GM18951 (cell line): ENCODE measurements at regions of chr3 and their contacts with region 1.

Region 1: DNA sequence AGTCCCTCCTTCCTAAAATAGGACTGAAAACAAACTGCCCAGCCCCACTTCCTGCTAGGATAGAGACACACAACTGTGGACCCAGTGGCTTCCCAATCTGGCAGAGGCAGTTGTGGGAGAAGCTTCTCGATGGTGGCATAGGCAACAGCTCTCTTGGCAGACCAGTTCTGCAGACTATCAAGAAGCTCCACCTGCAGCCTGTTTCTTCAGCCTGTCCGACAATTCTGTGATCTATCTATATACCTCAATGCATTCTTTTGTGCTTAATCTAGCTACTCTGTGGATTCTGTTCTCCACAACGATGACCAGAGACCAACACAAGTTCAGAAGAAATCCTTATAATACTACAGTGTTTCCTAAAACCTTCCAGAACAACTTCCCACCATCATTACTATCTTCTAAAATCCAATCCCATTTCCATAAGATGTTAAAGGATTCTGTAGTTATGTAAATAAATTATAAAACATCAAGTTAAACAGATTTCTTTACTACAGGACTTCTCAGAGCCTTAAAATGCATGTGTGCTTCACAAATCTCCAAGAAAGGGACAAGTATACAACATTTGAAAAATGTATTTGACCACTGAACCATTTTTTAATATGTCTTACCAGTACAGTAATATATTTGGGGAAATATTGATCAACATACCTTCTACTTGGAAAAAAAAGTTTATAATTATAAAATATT is 57.7 kb downstream of the IGF2BP2 start:
- POLR2A ChIP-seq: no peak

Region 2: DNA sequence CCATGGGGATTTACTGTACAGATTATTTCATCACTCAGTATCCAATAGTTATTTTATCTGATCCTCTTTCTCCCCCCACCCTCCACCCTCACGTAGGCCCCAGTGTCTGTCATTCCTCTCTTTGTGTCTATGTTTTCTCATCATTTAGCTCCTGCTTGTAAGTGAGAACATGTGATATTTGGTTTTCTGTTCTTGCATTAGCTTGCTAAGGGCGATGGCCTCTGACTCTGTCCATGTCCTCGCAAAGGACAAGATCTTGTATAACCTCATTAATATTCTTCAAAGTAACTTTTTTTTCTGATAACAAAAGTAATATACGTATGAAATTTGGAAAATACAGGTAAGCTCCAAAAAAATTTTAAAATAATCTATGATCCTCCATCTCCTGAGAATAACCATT is 336.8 kb before region 1 on chr3:
- in situ Hi-C with region 1: no loop called
- POLR2A ChIP-seq: no peak

Region 3: DNA sequence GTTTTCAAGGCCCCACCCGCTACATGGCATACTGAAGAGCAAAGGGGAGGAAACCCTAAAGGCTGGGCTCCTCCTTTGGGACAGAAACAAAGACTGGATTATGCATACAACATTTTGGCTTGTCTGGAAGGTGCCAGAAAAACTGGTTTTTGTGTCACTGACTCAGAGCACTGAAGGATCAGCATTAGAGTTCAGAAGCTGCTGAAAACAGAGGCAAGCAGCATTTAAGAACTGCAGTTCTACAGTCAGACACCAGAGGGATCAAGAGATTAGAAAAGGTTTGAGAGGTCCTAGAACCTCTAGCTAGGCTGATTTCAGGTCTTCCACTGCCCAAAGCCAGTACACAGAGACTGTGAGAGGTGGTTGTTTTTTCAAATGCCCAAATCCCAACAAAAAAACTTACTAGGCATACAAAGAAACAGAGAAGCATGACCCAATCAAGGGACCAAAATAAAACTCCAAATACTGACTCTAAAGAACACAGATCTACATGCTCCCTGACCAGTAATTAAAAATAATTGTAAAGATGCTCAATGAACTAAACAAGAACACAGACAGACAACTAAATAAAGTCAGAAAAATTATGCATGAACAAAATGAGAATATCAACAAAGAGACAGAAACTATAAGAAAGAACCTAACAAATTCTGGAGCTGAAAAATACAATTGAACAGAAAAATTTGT is 89.9 kb before region 1 on chr3:
- in situ Hi-C with region 1: loop called (anchors 5 kb)
- POLR2A ChIP-seq: no peak